ENCODE measurements at regions of chr2 and their contacts with region 1.

Region 1: DNA sequence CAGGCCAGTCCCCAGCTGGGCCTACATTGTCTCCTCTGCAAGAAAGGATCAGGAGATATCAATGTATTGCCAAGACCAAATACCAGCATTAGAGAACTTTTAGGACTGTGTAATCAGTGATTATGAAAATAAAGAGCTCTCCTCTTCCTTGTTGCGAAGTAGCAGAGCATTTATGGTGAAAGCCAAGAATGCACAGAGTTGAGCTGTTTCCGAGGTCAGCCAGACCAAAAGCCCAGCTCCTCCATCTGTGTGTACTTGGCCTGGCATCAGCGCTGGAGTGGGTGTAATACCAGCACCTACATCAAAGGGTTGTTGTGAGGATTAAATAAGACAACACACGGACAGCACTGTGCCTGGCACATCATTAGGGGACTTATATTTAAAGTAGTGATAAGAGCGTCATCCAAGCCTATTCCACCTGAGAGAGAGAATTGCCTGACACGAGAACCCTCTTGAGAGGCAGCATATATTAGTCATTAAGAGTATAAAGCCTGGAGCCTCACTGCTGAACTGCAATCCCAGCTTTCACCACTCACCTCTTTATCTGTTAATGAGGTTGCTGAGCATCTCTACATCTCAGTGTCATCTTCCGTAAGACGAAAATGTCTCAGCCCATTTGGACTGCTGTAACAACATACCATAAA is 7.4 kb upstream of the SLC16A14 start:
- DNase-seq: no peak
- H3K4me3 ChIP-seq: no peak overlapping the region
- H3K27ac ChIP-seq: no peak overlapping the region
- H3K4me1 ChIP-seq: no peaks in the 10 kb centered on the region; a peak in 3 of 7 replicates
- H3K27me3 ChIP-seq: no peaks in the 10 kb centered on the region
- CTCF ChIP-seq: peak in 1 of 3 experiments; percentile 2; a peak in 1 of 4 replicates
- EP300 ChIP-seq: no peak
- POLR2A ChIP-seq: no peak
- RAD21 ChIP-seq: no peak

Region 2: DNA sequence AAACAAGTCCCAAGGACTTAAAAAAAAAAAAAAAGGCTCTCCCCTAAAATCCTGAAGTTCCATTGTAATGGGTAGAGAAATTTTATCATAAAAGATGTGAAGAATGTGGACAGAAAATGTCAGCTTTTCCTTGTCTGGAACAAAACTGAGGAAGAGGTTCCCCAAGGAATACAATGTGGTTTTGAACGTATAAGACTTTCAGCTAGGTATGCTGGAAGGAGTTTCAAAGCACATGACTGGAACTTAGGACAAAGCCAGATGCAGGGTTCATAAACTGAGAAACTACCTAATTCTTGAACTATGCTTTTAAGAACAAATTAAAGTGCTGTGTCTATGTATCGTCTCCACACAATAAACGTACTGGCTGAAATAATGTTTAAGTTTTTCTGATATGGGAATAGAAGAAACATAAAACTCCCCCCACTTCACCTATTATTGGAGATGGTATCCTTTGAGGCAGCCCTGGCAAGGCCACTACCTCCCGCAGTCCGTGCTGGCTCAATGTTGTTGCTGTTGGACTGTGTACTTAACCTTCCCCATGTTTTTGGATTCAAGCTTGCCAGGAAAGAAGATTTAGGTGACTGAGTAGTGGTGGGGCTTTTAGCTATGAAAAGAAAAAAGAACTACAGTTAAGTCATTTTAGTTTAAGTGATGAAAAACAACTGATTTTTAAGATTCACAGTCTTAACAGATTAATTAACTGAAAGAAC is 277.5 kb before region 1 on chr2:
- CTCF ChIA-PET with region 1: no interaction called
- POLR2A ChIA-PET with region 1: no interaction called
- DNase-seq: no peak
- H3K4me3 ChIP-seq: no peak overlapping the region
- H3K27ac ChIP-seq: no peak overlapping the region
- H3K4me1 ChIP-seq: no peaks in the 10 kb centered on the region
- H3K27me3 ChIP-seq: no peaks in the 10 kb centered on the region
- CTCF ChIP-seq: no peak
- EP300 ChIP-seq: no peak
- POLR2A ChIP-seq: no peak
- RAD21 ChIP-seq: no peak

Region 3: DNA sequence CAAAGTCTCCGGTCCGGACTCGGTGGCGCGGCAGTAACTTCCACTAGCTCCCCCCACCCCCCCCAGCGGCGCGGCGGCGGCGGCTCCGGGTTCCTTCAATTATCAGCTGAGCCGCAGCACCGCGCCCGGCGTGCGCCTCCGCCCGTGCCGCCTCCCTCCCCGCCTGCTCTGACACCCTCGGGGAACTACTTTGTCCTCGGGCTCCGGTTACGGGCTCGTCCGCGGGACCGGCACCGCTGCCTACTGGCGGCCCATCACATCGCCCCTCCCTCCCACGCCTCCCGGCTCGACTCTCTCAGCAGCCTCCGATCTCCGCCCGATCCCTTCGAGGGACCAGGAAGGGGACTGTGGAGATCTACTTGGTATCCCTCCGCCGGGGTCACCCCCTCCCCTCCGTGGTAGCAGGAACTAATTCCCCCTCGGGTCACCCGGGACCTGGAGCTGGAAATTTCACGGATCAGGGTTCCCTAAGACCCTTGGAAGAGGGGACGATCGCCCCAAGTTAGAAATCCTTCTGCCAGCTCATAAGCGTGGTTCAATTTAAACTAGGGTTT is 154.1 kb before region 1 on chr2 and contains the start of gene TRIP12:
- CTCF ChIA-PET with region 1: no interaction called
- POLR2A ChIA-PET with region 1: no interaction called
- DNase-seq: peak; percentile 86 to 97
- H3K4me3 ChIP-seq: peak within 1 kb of the TSS; percentile 81 to 100 (median 86)
- H3K27ac ChIP-seq: peak within 1 kb of the TSS; percentile 88; the same call in 1 of the 2 replicates
- H3K4me1 ChIP-seq: peaks cover 0 to 6% (median 2%) of the 10 kb centered on the region in 4 experiments; a peak in 1 of 7 replicates
- H3K27me3 ChIP-seq: no peaks in the 10 kb centered on the region
- CTCF ChIP-seq: no peak
- EP300 ChIP-seq: no peak
- POLR2A ChIP-seq: no peak
- RAD21 ChIP-seq: no peak
- total RNA-seq, gene TRIP12: 155 and 174 TPM in 2 replicates

Region 4: DNA sequence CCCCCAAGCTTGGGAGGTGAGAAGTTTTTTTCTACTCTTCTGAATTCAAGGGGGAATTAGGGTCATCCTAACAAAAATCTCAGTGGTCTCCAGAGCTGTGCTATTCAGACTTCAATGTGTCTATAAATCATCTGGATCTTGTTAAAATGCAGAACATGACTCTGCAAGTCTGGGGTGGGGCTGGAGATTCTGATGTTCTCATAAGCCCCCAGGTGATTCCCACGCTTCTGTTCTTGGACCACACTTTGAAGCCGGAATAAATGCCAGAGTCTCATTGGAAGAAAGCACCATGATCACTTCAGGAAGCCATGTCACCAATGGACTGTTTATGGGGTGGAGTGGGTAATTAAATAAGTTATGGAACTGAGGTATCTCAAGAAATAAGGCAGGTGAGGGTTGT is 14.9 kb after region 1 on chr2:
- CTCF ChIA-PET with region 1: interaction called, 10 read pairs
- POLR2A ChIA-PET with region 1: no interaction called
- DNase-seq: no peak
- H3K4me3 ChIP-seq: no peak overlapping the region
- H3K27ac ChIP-seq: no peak overlapping the region
- H3K4me1 ChIP-seq: no peaks in the 10 kb centered on the region
- H3K27me3 ChIP-seq: no peaks in the 10 kb centered on the region
- CTCF ChIP-seq: no peak
- EP300 ChIP-seq: no peak
- POLR2A ChIP-seq: no peak
- RAD21 ChIP-seq: no peak

Measured in H1 (cell line).